Spleen (tissue), 13 donors: ENCODE measurements at regions of chr21 and their contacts with region 1.

Region 1: GRCh38 chr21:45439161-45439872 is 34.4 kb downstream of the COL18A1 start:
- DNase-seq: peak; percentile 95
- H3K4me3 ChIP-seq: peak overlapping the region in 7 of 8 donors; percentile 1 to 61 (median 13)
- H3K27ac ChIP-seq: peak overlapping the region; percentile 53 to 84 (median 79)
- H3K4me1 ChIP-seq: peaks cover 9 to 45% (median 27%) of the 10 kb centered on the region in 6 donors
- H3K27me3 ChIP-seq: peaks cover 0 to 29% (median 0%) of the 10 kb centered on the region in 7 donors
- CTCF ChIP-seq: peak; percentile 93 to 100 (median 98)
- POLR2A ChIP-seq: no peak

Region 2: DNA sequence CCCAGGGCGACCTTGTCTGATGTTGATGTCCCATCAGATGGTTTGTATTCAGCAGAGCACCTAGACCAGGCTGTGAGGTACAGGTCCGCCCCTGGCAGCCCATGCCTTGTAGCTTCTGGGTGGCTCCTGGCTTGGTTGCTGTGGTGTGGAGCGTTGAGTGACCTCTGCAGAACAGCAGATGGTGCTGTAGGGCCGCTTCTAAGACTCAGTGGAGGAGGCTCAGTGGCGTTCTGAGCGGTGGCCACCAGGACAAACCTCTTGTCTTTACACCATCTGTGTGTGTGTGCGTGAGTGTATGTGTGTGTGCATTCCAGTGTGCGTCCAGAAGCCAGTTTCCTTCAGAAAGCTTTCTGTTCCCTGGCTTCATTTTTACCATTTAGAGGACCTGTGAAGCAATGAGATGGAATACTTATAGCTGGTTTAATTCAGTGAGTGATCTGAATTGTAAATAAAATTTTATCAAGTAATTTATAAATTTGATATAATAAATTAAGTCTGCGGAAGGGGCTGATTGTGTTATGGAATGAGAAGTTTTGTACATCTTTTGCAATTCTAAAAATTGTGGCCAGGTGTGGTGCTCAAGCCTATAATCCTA is 298.9 kb before region 1 on chr21:
- intact Hi-C with region 1: loop called (anchors 5 kb)
- DNase-seq: peak; percentile 86
- H3K4me3 ChIP-seq: no peak overlapping the region
- H3K27ac ChIP-seq: no peak overlapping the region
- H3K4me1 ChIP-seq: peaks cover 0 to 49% (median 15%) of the 10 kb centered on the region in 6 donors
- H3K27me3 ChIP-seq: no peaks in the 10 kb centered on the region
- CTCF ChIP-seq: peak; percentile 64 to 91 (median 82)
- POLR2A ChIP-seq: no peak

Region 3: GRCh38 chr21:45292399-45293219 is 146.7 kb before region 1 on chr21:
- intact Hi-C with region 1: loop called (anchors 2 kb)
- DNase-seq: peak; percentile 94
- H3K4me3 ChIP-seq: peak overlapping the region in 1 of 8 donors; percentile 32
- H3K27ac ChIP-seq: peak overlapping the region; percentile 73 to 93 (median 85)
- H3K4me1 ChIP-seq: peaks cover 36 to 66% (median 56%) of the 10 kb centered on the region in 6 donors
- H3K27me3 ChIP-seq: no peaks in the 10 kb centered on the region
- CTCF ChIP-seq: peak; percentile 95 to 99 (median 97)
- POLR2A ChIP-seq: no peak

Region 4: GRCh38 chr21:45736690-45737484 is 297.6 kb after region 1 on chr21:
- intact Hi-C with region 1: no loop called
- DNase-seq: no peak
- H3K4me3 ChIP-seq: no peak overlapping the region
- H3K27ac ChIP-seq: no peak overlapping the region
- H3K4me1 ChIP-seq: no peaks in the 10 kb centered on the region
- H3K27me3 ChIP-seq: no peaks in the 10 kb centered on the region
- CTCF ChIP-seq: no peak
- POLR2A ChIP-seq: no peak